PC-3 (cell line): ENCODE measurements at regions of chr2 and their contacts with region 1.

Region 1: DNA sequence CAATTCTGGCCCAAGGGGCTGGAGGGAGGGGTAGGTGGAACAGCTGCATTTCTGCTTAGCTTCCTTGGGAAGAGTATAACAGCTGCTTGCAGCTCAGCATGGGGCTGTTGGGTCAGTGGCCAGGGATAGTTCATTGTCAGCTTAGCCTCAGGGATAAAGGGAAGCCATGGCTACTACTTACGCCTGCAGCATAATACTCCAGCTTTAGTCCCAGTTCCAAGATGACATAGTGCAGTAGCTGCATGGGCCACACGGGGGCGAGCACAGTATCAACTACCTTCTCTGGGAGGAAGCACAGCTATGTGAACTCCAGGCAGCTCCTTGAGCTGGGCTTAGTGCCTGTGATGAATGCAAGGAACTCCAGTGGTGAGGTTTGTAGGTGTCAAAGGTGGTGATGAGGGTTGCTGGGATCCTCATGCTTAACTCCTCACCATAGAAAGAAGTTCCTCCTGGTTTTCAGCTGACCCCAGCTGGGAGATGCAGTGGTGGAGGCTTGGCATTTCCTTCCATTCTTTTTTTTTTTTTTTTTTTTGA is 35.4 kb upstream of the RHOB start:
- DNase-seq: peak; percentile 89
- ATAC-seq: peak; percentile 99
- H3K4me3 ChIP-seq: no peak overlapping the region
- H3K27ac ChIP-seq: no peak overlapping the region
- H3K4me1 ChIP-seq: no peaks in the 10 kb centered on the region
- H3K27me3 ChIP-seq: no peaks in the 10 kb centered on the region
- CTCF ChIP-seq: peak; percentile 90

Region 2: DNA sequence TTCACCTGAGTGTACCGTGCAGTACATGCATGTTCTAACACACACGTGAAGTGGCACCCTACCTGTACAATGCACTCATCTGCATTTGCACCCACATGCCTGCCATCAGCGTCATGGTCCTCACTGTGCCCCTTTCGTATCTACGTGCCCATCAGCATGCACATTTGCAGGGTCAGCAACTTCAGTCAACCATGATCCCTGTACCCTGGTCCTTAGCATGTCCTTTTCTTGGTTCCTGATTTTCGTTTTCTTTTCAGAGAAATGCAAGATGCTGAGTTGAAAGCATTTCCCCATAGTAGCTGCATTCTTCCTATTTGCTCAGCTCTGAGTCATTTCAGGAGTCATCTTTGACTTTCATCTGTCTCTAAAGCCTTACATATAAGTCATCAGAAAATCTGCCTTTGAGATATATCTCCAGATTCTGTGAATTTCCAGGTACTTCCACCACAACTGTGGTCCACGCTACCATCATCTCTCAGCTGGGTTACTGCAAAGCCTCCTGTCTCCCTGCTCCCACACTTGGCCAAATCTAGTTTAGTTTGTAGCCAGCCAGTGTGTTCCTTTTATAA is 46.1 kb before region 1 on chr2:
- CTCF ChIA-PET with region 1: no interaction called
- POLR2A ChIA-PET with region 1: no interaction called
- intact Hi-C with region 1: no loop called
- DNase-seq: peak; percentile 86
- ATAC-seq: peak; percentile 97
- H3K4me3 ChIP-seq: no peak overlapping the region
- H3K27ac ChIP-seq: peak overlapping the region; percentile 32
- H3K4me1 ChIP-seq: peaks cover 22% of the 10 kb centered on the region
- H3K27me3 ChIP-seq: no peaks in the 10 kb centered on the region
- CTCF ChIP-seq: no peak

Region 3: GRCh38 chr2:20381444-20381843 is 30.0 kb before region 1 on chr2:
- CTCF ChIA-PET with region 1: interaction called, 12 read pairs
- POLR2A ChIA-PET with region 1: no interaction called
- intact Hi-C with region 1: no loop called
- DNase-seq: peak; percentile 12
- ATAC-seq: no peak
- H3K4me3 ChIP-seq: no peak overlapping the region
- H3K27ac ChIP-seq: no peak overlapping the region
- H3K4me1 ChIP-seq: peaks cover 22% of the 10 kb centered on the region
- H3K27me3 ChIP-seq: no peaks in the 10 kb centered on the region
- CTCF ChIP-seq: no peak

Region 4: DNA sequence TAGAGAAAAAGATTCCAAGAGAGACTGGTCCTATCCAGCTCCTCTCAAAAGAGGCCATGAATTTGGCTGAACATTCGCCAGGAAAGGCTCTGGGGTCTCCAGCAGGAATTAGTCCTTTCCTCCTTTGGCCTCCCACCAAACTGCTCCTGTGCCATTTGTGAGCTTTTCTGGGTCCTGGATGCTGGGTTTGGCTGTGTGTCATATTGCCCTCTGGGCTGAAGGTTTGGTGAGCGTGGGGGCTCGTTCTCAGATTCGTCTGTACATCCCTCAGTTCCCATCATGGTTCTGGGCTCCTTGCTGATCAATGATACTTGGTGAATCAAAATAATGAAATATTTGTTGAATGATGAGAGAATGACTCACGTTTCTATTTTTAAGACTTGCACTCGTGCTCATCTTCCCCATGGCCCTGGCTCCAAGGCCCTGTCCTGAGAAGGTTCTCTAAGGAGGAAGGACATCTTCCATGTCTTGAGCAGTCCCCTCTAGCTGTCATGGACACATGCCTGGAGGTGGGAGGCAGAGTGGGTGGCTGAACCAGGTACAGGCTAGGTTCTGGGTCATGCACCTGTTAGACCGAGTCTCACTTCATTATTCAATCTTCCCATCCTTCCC is 12.4 kb before region 1 on chr2:
- CTCF ChIA-PET with region 1: interaction called, 12 read pairs
- POLR2A ChIA-PET with region 1: no interaction called
- intact Hi-C with region 1: no loop called
- DNase-seq: peak; percentile 55
- ATAC-seq: no peak
- H3K4me3 ChIP-seq: no peak overlapping the region
- H3K27ac ChIP-seq: no peak overlapping the region
- H3K4me1 ChIP-seq: peaks cover 9% of the 10 kb centered on the region
- H3K27me3 ChIP-seq: no peaks in the 10 kb centered on the region
- CTCF ChIP-seq: no peak

Region 5: GRCh38 chr2:20422402-20423271 is 11.2 kb after region 1 on chr2:
- CTCF ChIA-PET with region 1: interaction called, 14 read pairs
- POLR2A ChIA-PET with region 1: interaction called, 3 read pairs
- intact Hi-C with region 1: no loop called
- DNase-seq: no peak
- ATAC-seq: no peak
- H3K4me3 ChIP-seq: no peak overlapping the region
- H3K27ac ChIP-seq: 0 out of 2 replicates have a peak overlapping the region, but pooled peaks have one; percentile 16
- H3K4me1 ChIP-seq: peaks cover 30% of the 10 kb centered on the region
- H3K27me3 ChIP-seq: no peaks in the 10 kb centered on the region
- CTCF ChIP-seq: 0 out of 2 replicates have a peak, but pooled peaks have one; percentile 23

Region 6: DNA sequence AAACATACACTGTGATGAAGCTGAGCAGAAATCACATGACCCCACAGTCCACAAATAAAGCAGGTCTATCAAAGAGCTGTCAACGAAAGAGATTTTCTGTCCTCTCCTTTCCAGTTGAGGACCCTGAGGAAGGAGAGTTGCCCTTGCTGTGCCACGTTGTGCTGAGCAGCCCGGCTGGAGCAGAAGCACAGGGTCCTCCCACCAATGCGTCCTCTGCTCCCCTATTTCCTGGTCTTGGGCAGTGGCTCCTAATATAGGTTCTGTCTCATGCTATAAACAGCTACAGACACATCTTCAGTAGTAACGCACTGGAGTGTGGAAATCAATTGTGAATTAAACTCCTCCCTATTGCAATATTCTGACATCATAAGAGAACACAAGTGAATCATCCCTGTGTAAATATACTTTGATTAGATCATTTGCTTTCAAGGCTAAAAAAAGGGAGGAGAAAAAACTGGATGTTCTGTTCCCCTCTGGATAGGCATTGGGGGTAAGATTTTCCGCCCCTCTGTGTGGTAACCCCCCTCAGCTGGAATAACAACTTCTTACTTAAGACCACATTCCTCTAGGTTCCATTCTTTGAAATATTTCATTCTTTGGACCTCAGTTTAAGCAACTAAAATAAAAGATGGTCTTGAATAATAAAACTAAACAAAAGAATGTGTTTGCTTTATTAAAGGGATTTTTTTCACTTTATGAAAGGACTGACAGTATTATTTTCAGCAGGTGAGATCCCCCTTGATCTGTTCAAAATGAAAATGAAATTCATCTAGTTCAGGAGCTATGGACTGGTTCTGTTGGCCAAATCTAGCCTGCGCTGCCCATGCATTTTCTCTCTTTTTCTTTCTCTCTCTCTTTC is 27.1 kb after region 1 on chr2:
- CTCF ChIA-PET with region 1: interaction called, 18 read pairs
- POLR2A ChIA-PET with region 1: no interaction called
- intact Hi-C with region 1: loop called (anchors 2 kb)
- DNase-seq: peak; percentile 87
- ATAC-seq: peak; percentile 90
- H3K4me3 ChIP-seq: peak overlapping the region; percentile 57
- H3K27ac ChIP-seq: peak overlapping the region; percentile 83
- H3K4me1 ChIP-seq: peaks cover 23% of the 10 kb centered on the region
- H3K27me3 ChIP-seq: no peaks in the 10 kb centered on the region
- CTCF ChIP-seq: no peak

Region 7: GRCh38 chr2:20635675-20636584 is 224.5 kb after region 1 on chr2:
- CTCF ChIA-PET with region 1: interaction called, 10 read pairs
- POLR2A ChIA-PET with region 1: no interaction called
- intact Hi-C with region 1: loop called (anchors 1 kb)
- DNase-seq: peak; percentile 83
- ATAC-seq: peak; percentile 98
- H3K4me3 ChIP-seq: no peak overlapping the region
- H3K27ac ChIP-seq: no peak overlapping the region
- H3K4me1 ChIP-seq: peaks cover 19% of the 10 kb centered on the region
- H3K27me3 ChIP-seq: no peaks in the 10 kb centered on the region
- CTCF ChIP-seq: peak; percentile 95